ENCODE measurements at regions of chr22 and their contacts with region 1.

Region 1: DNA sequence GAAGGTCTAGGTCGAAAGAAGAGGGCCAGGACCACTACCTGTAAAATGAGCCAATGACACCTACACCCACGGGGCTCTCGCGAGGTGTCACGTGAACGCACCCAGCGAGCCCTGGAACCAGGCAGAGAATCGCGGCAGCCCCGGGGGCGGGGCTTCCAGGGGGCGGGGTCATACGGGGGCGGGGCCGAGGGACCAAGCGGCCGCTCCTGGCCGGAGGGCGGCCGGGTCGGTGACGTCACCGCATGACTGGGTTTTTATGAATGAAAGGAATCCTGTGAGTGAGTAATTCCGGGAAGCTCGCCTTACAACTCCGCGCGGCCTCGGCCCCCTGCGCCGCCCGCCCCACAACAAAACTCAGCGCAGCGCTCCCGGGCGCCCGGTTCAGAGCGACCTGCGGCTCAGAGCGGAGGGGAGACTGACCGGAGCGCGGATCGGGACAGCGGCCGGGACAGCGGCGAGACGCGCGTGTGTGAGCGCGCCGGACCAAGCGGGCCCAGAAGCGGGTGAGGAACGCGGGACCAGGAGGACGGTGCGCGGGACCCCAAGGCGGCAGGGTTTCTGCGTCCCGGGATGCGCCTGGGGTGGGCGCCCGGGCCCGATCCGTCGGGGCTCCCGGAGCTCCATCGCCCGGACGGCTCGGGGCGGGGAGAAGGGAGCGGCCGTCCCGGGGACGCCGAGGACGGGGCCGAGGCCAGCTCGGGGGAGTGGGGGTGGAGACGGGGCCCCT is at the start of gene MAFF:
- DNase-seq: peak; percentile 75 to 93 (median 88)
- ATAC-seq: peak; percentile 74
- H3K4me3 ChIP-seq: peak within 1 kb of the TSS; percentile 67 to 89
- H3K4me3 Mint-ChIP-seq: peak within 1 kb of the TSS; percentile 77
- H3K27ac ChIP-seq: peak within 1 kb of the TSS; percentile 63 to 98
- H3K27ac Mint-ChIP-seq: peak within 1 kb of the TSS; percentile 96
- H3K4me1 ChIP-seq: peaks cover 30% of the 10 kb centered on the region
- H3K4me1 Mint-ChIP-seq: peaks cover 32% of the 10 kb centered on the region
- H3K27me3 ChIP-seq: no peaks in the 10 kb centered on the region
- H3K27me3 Mint-ChIP-seq: no peaks in the 10 kb centered on the region
- CTCF ChIP-seq: no peak
- total RNA-seq, gene MAFF: 87.6 to 91.2 TPM

Region 2: GRCh38 chr22:37508431-37508992 is 693.4 kb before region 1 on chr22:
- CTCF ChIA-PET with region 1: no interaction called
- POLR2A ChIA-PET with region 1: no interaction called
- intact Hi-C with region 1: no loop called
- DNase-seq: no peak
- ATAC-seq: no peak
- H3K4me3 ChIP-seq: no peak overlapping the region
- H3K4me3 Mint-ChIP-seq: no peak overlapping the region
- H3K27ac ChIP-seq: no peak overlapping the region
- H3K27ac Mint-ChIP-seq: no peak overlapping the region
- H3K4me1 ChIP-seq: no peaks in the 10 kb centered on the region
- H3K4me1 Mint-ChIP-seq: no peaks in the 10 kb centered on the region
- H3K27me3 ChIP-seq: no peaks in the 10 kb centered on the region
- H3K27me3 Mint-ChIP-seq: no peaks in the 10 kb centered on the region
- CTCF ChIP-seq: no peak

Region 3: GRCh38 chr22:37953437-37954179 is 248.3 kb before region 1 on chr22 and contains the starts of genes C22orf23 and POLR2F:
- CTCF ChIA-PET with region 1: no interaction called
- POLR2A ChIA-PET with region 1: no interaction called
- intact Hi-C with region 1: loop called in 1 of 2 experiments (anchors 2 kb)
- DNase-seq: peak; percentile 88 to 98 (median 97)
- ATAC-seq: peak; percentile 94
- H3K4me3 ChIP-seq: peak within 1 kb of the TSS; percentile 91 to 98
- H3K4me3 Mint-ChIP-seq: peak within 1 kb of the TSS; percentile 100
- H3K27ac ChIP-seq: peak within 1 kb of the TSS; percentile 62 to 79
- H3K27ac Mint-ChIP-seq: peak within 1 kb of the TSS; percentile 98
- H3K4me1 ChIP-seq: peaks cover 13% of the 10 kb centered on the region
- H3K4me1 Mint-ChIP-seq: peaks cover 45% of the 10 kb centered on the region
- H3K27me3 ChIP-seq: peaks cover 0 to 6% of the 10 kb centered on the region in 2 experiments
- H3K27me3 Mint-ChIP-seq: peaks cover 12% of the 10 kb centered on the region
- CTCF ChIP-seq: no peak
- total RNA-seq, gene C22orf23: 0.43 TPM in 1 of 2 experiments, not detected in the other
- total RNA-seq, gene POLR2F: 22.7 to 25.6 TPM

Region 4: DNA sequence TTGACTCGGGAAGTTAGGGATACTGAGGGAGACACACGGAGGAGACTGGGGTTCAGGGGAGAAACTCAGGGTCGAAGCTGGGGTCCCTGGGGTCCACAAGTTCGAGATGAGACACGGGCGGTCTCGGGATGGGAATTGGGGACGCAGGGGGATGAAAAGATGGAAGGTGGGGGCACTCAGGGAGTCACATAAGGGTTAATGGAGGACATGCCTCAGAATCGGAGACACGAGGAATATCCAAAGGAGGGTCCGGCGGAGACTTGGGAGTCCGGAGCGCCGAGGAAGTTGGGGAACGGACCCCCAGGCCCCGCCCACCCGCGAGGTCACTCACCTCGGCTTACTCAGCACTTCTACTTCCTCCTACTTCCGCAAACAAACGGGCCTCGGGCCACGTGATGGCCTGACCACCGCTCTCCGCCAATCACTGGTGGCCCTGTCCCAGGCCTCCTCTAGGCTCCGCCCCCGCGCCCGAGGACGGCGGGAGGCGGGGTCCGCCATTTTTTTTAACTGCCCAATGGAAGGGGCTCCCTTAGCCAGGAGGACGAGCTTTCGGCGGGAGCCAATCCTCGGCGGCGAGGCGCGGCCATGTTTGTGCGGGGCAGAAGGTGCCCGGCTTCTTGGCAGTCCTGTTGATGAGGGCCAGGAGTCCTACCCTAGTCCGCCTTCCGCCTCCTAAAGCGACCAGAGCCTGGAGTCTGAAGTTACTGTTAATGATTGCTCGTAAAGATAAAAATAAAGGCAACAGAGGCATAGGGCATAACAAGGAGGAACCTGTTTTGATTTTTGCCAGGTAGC is 20.2 kb before region 1 on chr22 and contains the start of gene PLA2G6:
- CTCF ChIA-PET with region 1: interaction called, 4 read pairs
- POLR2A ChIA-PET with region 1: interaction called, 13 read pairs
- intact Hi-C with region 1: loop called (anchors 1 kb)
- DNase-seq: peak; percentile 92 to 98 (median 96)
- ATAC-seq: peak; percentile 87
- H3K4me3 ChIP-seq: peak within 1 kb of the TSS; percentile 69 to 92
- H3K4me3 Mint-ChIP-seq: peak within 1 kb of the TSS; percentile 93
- H3K27ac ChIP-seq: peak within 1 kb of the TSS; percentile 18 to 90
- H3K27ac Mint-ChIP-seq: peak within 1 kb of the TSS; percentile 88
- H3K4me1 ChIP-seq: peaks cover 25% of the 10 kb centered on the region
- H3K4me1 Mint-ChIP-seq: peaks cover 49% of the 10 kb centered on the region
- H3K27me3 ChIP-seq: no peaks in the 10 kb centered on the region
- H3K27me3 Mint-ChIP-seq: no peaks in the 10 kb centered on the region
- CTCF ChIP-seq: no peak
- total RNA-seq, gene PLA2G6: 35.4 to 44.4 TPM

Region 5: DNA sequence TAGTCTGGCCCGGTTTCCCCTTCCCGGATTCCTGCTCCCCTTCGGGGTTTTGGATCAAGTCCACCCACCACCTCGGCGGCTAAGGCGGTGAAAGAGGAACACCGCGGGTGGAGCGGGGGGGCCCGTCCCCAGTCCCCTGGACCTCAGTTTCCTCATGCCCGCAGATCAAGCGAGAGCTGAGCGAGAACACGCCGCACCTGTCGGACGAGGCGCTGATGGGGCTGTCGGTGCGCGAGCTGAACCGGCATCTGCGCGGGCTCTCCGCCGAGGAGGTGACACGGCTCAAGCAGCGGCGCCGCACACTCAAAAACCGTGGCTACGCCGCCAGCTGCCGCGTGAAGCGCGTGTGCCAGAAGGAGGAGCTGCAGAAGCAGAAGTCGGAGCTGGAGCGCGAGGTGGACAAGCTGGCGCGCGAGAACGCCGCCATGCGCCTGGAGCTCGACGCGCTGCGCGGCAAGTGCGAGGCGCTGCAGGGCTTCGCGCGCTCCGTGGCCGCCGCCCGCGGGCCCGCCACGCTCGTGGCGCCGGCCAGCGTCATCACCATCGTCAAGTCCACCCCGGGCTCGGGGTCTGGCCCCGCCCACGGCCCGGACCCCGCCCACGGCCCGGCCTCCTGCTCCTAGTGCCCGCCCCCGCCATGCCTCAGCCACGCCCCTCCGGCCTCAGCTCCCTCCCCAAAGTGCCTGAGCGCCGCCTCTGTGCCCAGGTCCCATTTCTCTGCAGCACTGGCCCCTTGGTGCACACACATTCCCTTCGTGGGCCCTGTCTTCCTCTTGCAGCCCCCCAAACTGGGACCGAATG is 12.6 kb after region 1 on chr22:
- CTCF ChIA-PET with region 1: interaction called, 6 read pairs
- POLR2A ChIA-PET with region 1: interaction called, 6 read pairs
- intact Hi-C with region 1: loop called (anchors 1 kb)
- DNase-seq: peak; percentile 49 to 85 (median 69)
- ATAC-seq: peak; percentile 82
- H3K4me3 ChIP-seq: peak overlapping the region; percentile 24 to 30
- H3K4me3 Mint-ChIP-seq: peak overlapping the region; percentile 54
- H3K27ac ChIP-seq: no peak overlapping the region
- H3K27ac Mint-ChIP-seq: no peak overlapping the region
- H3K4me1 ChIP-seq: peaks cover 6% of the 10 kb centered on the region
- H3K4me1 Mint-ChIP-seq: peaks cover 16% of the 10 kb centered on the region
- H3K27me3 ChIP-seq: no peaks in the 10 kb centered on the region
- H3K27me3 Mint-ChIP-seq: no peaks in the 10 kb centered on the region
- CTCF ChIP-seq: no peak

Region 6: DNA sequence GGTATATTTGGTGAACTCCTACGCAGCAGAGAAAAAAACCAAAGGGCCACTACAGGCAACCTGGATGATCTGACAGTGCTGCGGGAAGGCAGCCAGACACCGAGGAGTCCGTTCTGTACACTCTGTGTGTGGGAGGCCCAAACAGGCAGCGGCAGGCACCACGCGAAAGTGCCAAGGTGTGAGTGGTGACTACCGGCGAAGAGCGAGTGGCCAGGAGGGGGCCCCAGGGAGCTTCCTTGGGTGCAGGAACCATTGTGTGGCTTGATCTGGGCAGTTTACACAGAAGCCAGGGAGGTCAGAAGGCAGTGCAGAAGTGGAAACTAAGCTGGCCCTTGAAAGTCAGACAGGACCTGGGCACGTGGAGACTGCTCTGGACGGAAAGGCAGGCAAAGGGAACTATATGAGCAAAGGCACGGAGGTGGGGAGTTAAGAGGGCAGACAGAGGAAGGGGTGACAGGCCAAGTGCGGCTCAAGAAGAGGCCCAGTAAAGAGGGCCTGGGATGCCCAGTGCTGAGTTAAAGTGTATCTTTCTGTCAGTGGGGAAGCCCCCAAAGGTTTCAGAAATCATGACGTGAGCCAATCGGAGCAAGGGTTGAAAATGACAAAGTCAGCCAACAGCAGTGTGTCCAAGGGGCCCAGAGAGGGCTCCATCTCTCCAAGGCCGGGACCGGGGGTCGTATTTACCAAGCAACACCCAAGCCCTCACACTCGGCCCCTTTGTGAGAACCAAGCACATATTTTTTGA is 60.4 kb after region 1 on chr22:
- CTCF ChIA-PET with region 1: interaction called, 3 read pairs
- POLR2A ChIA-PET with region 1: no interaction called
- intact Hi-C with region 1: loop called in 1 of 2 experiments (anchors 2 kb)
- DNase-seq: peak in 6 of 9 experiments; percentile 42 to 61 (median 48)
- ATAC-seq: no peak
- H3K4me3 ChIP-seq: no peak overlapping the region
- H3K4me3 Mint-ChIP-seq: no peak overlapping the region
- H3K27ac ChIP-seq: no peak overlapping the region
- H3K27ac Mint-ChIP-seq: no peak overlapping the region
- H3K4me1 ChIP-seq: peaks cover 20% of the 10 kb centered on the region
- H3K4me1 Mint-ChIP-seq: peaks cover 42% of the 10 kb centered on the region
- H3K27me3 ChIP-seq: no peaks in the 10 kb centered on the region
- H3K27me3 Mint-ChIP-seq: no peaks in the 10 kb centered on the region
- CTCF ChIP-seq: peak; percentile 38

Region 7: GRCh38 chr22:38272373-38273134 is 70.7 kb after region 1 on chr22 and contains the start of gene TMEM184B:
- CTCF ChIA-PET with region 1: no interaction called
- POLR2A ChIA-PET with region 1: no interaction called
- intact Hi-C with region 1: loop called (anchors 2 kb)
- DNase-seq: peak; percentile 62 to 93 (median 78)
- ATAC-seq: peak; percentile 94
- H3K4me3 ChIP-seq: peak within 1 kb of the TSS; percentile 70 to 77
- H3K4me3 Mint-ChIP-seq: peak within 1 kb of the TSS; percentile 92
- H3K27ac ChIP-seq: peak within 1 kb of the TSS; percentile 59 to 93
- H3K27ac Mint-ChIP-seq: peak within 1 kb of the TSS; percentile 95
- H3K4me1 ChIP-seq: peaks cover 31% of the 10 kb centered on the region
- H3K4me1 Mint-ChIP-seq: peaks cover 50% of the 10 kb centered on the region
- H3K27me3 ChIP-seq: no peaks in the 10 kb centered on the region
- H3K27me3 Mint-ChIP-seq: peaks cover 3% of the 10 kb centered on the region
- CTCF ChIP-seq: no peak
- total RNA-seq, gene TMEM184B: 53.0 TPM

Region 8: GRCh38 chr22:38317122-38317994 is 115.5 kb after region 1 on chr22 and contains the start of gene CSNK1E:
- CTCF ChIA-PET with region 1: no interaction called
- POLR2A ChIA-PET with region 1: no interaction called
- intact Hi-C with region 1: loop called (anchors 5 kb)
- DNase-seq: peak; percentile 39 to 85 (median 73)
- ATAC-seq: peak; percentile 61
- H3K4me3 ChIP-seq: peak within 1 kb of the TSS; percentile 59 to 60
- H3K4me3 Mint-ChIP-seq: peak within 1 kb of the TSS; percentile 88
- H3K27ac ChIP-seq: peak within 1 kb of the TSS; percentile 80 to 89
- H3K27ac Mint-ChIP-seq: peak within 1 kb of the TSS; percentile 96
- H3K4me1 ChIP-seq: peaks cover 43% of the 10 kb centered on the region
- H3K4me1 Mint-ChIP-seq: peaks cover 45% of the 10 kb centered on the region
- H3K27me3 ChIP-seq: no peaks in the 10 kb centered on the region
- H3K27me3 Mint-ChIP-seq: no peaks in the 10 kb centered on the region
- CTCF ChIP-seq: no peak
- total RNA-seq, gene CSNK1E: 172 to 178 TPM

Region 9: DNA sequence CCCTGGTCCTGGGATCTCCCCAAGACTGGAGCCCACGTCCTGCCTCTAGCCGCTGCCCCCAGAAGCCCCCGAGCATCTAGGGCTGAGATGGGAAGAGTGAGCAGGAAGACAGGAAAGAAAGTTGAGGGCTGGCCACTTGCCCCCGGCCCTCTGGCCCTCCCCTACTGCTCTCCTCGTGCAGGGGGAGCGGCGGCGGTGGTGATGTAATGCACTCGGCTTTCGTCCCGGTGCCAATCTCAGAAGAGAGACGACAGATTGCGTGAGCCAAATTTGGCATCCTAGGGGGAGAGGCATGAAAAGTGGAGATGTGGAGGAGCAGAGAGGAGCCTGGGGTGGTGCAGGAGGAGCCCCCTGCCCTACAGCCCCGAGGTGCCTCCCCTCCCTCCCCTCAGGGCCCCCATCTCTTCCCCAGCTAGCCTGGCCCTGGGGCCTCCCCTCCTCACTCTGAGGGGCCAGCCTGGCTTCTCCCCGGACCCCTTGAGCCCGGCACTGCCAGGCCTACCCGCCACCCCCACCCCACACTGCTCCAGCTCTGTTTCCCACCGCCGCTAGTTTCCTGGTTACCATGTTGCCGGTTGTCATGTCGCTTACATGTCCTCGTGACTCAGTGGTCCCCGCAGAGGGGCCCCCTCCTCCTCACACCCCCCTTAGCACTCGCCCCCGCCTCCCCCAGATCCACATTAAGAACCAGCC is 250.6 kb after region 1 on chr22:
- CTCF ChIA-PET with region 1: no interaction called
- POLR2A ChIA-PET with region 1: no interaction called
- intact Hi-C with region 1: no loop called
- DNase-seq: no peak
- ATAC-seq: no peak
- H3K4me3 ChIP-seq: no peak overlapping the region
- H3K4me3 Mint-ChIP-seq: no peak overlapping the region
- H3K27ac ChIP-seq: no peak overlapping the region
- H3K27ac Mint-ChIP-seq: no peak overlapping the region
- H3K4me1 ChIP-seq: peaks cover 6% of the 10 kb centered on the region
- H3K4me1 Mint-ChIP-seq: peaks cover 15% of the 10 kb centered on the region
- H3K27me3 ChIP-seq: peaks cover 16 to 26% of the 10 kb centered on the region in 2 experiments
- H3K27me3 Mint-ChIP-seq: peaks cover 45% of the 10 kb centered on the region
- CTCF ChIP-seq: no peak

Measured in CD8-positive, alpha-beta T cell (primary cell).